Activated T-helper 2 cell treated with anti-CD3 and anti-CD28 coated beads, Interferon-gamma antibody, Interleukin-2, Interleukin-4, amounts not matched to agents 10 μg/mL and 5 μg/mL and 100 μg/mL, durations not matched to agents 14 hours and 24 hours and 36 hours (primary cell): ENCODE measurements at regions of chr9 and their contacts with region 1.

Region 1: DNA sequence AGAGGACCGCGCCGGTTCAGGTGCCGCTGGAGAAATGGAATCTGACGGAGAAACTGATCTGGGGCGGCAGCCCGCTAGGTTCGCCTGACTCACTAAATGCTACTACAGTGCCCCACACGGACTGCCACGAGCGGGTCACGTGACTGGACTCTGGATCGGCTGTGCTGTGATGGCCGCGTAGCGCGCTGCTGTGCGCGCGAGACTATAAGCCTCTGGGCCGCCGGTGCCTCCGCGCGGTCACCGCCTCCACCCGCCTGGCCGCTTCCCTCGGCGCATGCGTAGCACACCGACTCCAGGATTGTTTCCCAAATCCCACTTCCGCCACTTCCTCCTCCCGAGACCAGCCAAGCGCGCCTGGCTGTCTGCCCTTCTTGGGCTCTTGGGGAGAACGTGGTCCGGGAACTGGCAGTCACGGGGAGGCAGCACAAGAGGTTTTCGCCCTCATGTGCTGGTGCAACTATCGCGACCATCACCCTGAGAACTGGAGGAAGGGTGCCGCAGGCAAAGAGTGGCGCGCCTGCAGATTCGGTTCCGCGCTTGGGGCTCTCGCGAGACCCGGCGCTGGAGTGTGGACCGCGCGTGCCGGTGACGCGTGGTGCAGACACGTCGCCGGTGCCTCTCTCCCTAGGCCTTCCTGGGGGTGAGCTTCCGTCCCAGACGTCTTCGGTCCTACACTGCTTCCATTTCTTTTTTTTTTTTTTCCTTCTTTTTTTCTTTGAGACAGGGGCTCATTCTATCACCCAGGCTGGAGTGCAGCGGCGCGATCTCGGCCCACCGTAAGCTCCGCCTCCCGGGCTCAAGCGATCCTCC is 35.8 kb upstream of the GLDC start:
- DNase-seq: peak; percentile 89
- H3K4me3 Mint-ChIP-seq: peak overlapping the region; percentile 93
- H3K27ac Mint-ChIP-seq: peak overlapping the region; percentile 99
- H3K4me1 Mint-ChIP-seq: peaks cover 17% of the 10 kb centered on the region
- H3K27me3 Mint-ChIP-seq: no peaks in the 10 kb centered on the region

Region 2: DNA sequence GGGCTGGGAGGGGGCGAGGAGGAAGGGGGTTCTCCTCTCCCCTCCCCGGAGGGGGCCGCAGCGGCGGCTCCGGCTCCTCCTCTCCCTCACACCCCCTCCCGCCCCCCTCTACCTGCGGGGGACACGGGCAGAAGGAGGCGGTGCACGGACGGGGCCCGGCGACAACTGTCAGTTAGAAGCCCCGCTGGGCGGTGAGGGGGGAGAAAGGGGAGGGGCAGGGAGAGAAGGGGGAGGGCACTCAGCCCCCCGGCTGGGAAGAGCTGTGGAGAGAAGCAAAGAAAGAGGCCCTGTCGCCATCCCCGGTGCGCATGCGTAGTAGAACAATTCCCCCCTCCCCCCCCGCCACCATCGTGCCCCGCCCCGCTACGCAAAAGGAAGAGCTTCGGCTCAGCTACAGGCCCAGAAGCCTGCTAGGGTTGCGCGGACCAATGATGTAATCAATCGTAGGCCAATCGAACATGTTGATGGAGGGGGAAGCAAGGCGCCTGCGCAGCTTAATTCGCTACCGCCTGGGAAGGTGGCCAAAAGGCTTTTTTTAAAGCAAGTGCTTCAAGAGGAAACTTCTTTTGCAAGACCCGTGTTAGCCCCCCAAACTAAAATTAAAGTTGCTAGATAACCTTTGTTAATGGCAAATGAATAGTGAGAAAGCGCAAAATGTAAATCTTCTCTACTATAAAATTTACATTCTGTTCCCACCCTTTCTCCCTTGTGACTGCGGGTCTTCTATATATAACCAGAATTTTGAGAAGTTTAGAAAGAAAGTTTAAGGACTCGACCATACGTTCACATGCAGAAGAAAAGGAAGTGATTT is 673.0 kb before region 1 on chr9:
- intact Hi-C with region 1: loop called (anchors 1 kb)
- DNase-seq: peak; percentile 92
- H3K4me3 Mint-ChIP-seq: peak overlapping the region; percentile 74
- H3K27ac Mint-ChIP-seq: peak overlapping the region; percentile 84
- H3K4me1 Mint-ChIP-seq: peaks cover 53% of the 10 kb centered on the region
- H3K27me3 Mint-ChIP-seq: no peaks in the 10 kb centered on the region

Region 3: GRCh38 chr9:6215562-6215961 is 465.8 kb before region 1 on chr9 and contains the start of gene IL33:
- intact Hi-C with region 1: no loop called
- DNase-seq: no peak
- H3K4me3 Mint-ChIP-seq: no peak within 1 kb of the TSS
- H3K27ac Mint-ChIP-seq: no peak within 1 kb of the TSS
- H3K4me1 Mint-ChIP-seq: no peaks in the 10 kb centered on the region
- H3K27me3 Mint-ChIP-seq: peaks cover 11% of the 10 kb centered on the region
- total RNA-seq, gene IL33: not detected in 2 replicates

Region 4: DNA sequence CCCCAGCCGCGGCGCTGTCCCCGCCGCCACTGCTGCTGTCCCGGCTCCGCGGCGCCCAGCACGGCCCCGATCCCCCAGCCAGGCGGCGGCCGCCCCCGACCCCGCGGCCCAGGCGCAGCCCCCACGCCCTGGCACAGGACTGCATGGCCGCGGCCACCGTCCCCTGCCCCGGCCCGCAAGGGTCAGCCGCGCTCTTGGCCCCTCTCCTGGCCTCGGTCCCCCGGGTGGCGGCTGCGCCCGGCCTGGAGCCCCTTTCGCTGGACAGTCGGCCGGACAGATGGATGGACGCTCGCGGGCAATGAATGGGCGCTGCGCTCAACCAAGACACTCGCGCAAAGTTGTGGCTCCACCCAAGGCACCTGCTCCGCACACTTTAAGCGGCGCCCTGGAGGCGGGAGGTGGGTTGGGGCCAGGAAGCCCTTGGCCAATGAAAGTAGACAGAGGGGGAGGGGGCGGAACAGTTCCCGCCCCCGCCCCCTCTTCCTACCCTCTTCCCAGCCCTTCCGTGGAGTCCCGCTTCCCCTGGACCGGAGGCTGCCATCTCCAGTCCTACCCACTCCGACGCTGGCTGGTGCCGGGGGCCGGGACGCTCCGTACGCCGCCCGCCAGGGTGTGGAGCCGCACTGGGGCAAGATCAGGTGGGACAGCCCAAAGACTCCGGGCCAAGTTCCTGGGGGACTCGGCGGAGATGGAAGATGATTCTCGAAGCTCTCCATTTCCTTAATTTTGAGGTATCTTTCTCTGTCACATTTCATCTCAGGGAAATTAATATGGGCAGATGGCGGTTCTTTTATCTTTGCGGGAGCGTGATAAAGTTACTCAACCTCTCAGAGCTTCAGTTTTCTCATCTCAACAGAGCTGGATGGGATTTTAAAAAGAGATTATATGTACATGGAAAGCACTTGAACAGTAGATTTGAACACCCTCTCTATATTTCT is 35.7 kb before region 1 on chr9 and contains the start of gene GLDC:
- intact Hi-C with region 1: loop called (anchors 2 kb)
- DNase-seq: peak; percentile 17
- H3K4me3 Mint-ChIP-seq: peak within 1 kb of the TSS; percentile 83
- H3K27ac Mint-ChIP-seq: peak within 1 kb of the TSS; percentile 33
- H3K4me1 Mint-ChIP-seq: peaks cover 18% of the 10 kb centered on the region
- H3K27me3 Mint-ChIP-seq: peaks cover 67% of the 10 kb centered on the region
- total RNA-seq, gene GLDC: 1.0 and 1.4 TPM in 2 replicates

Region 5: DNA sequence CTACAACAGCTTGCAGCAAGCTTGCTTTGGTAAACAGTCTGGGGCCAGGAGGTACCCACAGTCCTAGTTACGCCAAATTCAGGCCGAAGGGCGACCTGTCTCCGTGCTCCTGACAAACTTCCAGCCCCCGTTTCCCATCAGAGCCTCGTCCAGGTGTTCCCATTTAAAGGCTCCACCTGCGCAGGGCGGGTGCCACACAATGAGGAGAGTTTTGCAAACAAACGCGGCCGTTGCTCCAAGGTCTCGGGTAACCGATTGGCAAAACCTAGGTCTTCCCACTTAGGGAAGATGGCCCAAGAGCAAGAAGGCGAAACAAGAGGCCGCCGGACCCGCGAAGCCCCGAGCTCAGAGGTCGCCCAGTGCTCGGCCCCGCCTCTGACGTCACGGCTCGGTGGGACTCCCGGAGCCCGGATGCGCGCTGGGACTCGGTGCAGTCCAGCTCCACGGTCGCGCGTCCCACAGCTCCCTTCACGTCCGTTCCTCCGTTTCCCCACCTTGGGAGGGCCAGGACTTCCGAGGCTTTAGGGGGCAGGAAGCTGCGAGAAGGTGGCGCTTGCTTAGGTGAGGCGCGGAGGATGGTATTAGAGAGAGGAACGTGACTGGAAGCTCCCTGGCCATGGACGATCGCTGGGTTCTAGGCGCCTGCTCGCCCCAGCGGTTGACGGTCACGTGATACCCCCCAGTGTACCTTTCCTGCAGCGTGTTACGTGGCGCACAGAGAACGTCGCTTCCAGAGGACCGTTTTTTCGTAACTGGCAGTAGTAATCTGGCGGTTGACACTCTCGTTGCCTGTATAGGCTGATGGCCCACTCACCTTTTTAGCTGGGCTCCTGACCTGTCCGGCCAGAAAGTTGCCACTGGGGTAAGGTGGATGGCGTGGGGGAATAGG is 34.6 kb after region 1 on chr9:
- intact Hi-C with region 1: loop called (anchors 1 kb)
- DNase-seq: peak; percentile 58
- H3K4me3 Mint-ChIP-seq: peak overlapping the region; percentile 83
- H3K27ac Mint-ChIP-seq: peak overlapping the region; percentile 91
- H3K4me1 Mint-ChIP-seq: peaks cover 6% of the 10 kb centered on the region
- H3K27me3 Mint-ChIP-seq: no peaks in the 10 kb centered on the region

Region 6: GRCh38 chr9:7088611-7089010 is 407.3 kb after region 1 on chr9:
- intact Hi-C with region 1: no loop called
- DNase-seq: no peak
- H3K4me3 Mint-ChIP-seq: no peak overlapping the region
- H3K27ac Mint-ChIP-seq: no peak overlapping the region
- H3K4me1 Mint-ChIP-seq: peaks cover 13% of the 10 kb centered on the region
- H3K27me3 Mint-ChIP-seq: no peaks in the 10 kb centered on the region